Mammary epithelial cell (primary cell): ENCODE measurements at regions of chr16 and their contacts with region 1.

Region 1: GRCh38 chr16:51994597-51994996 is 552.3 kb downstream of the TOX3 start:
- DNase-seq: peak; percentile 96
- H3K4me3 ChIP-seq: no peak overlapping the region
- H3K27ac ChIP-seq: no peak overlapping the region
- H3K4me1 ChIP-seq: peaks cover 22% of the 10 kb centered on the region
- H3K27me3 ChIP-seq: no peaks in the 10 kb centered on the region
- CTCF ChIP-seq: no peak

Region 2: DNA sequence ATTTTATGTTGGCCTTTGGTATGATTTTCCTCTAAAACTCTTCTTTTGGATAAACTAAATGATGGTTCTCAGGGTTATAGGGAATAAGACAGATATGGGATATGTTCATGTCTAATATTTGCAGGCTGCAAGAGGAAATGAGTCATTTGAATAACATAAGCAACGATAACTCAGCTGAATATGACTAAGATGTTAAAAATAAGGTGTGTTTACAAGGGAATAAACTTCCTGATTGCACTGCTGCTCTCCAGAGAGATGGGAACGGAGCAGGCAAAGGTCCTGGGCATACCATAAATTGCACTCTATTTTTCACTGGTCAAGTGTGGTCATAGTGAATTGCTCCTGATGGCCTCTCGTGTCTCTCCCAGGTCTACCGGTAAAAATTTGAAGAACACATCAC is 113.8 kb before region 1 on chr16:
- CTCF ChIA-PET with region 1: no interaction called
- dilution Hi-C with region 1: no loop called
- in situ Hi-C with region 1: no loop called
- intact Hi-C with region 1: loop called (anchors 5 kb)
- DNase-seq: peak; percentile 72
- H3K4me3 ChIP-seq: no peak overlapping the region
- H3K27ac ChIP-seq: peak overlapping the region; percentile 46
- H3K4me1 ChIP-seq: peaks cover 21% of the 10 kb centered on the region
- H3K27me3 ChIP-seq: no peaks in the 10 kb centered on the region
- CTCF ChIP-seq: no peak

Region 3: DNA sequence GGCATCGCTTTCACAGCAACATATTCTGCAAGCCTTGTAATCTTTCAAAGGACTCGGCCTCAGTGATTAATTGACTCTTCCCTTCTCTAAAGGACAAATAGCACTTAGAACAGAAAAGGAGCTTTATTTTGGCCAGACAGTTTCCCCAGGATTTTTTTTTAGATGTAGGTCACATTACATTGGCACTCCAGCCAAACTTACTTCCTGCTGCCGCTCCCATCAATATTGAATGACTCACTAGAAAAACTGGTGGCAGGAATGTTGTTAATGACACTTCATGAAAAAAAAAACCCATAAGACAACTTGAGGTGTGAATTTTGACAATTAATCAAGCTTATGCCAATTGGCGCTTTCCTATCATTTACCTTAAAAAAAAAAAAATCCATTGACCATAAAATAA is 119.8 kb after region 1 on chr16:
- CTCF ChIA-PET with region 1: no interaction called
- dilution Hi-C with region 1: no loop called
- in situ Hi-C with region 1: no loop called
- intact Hi-C with region 1: no loop called
- DNase-seq: no peak
- H3K4me3 ChIP-seq: no peak overlapping the region
- H3K27ac ChIP-seq: no peak overlapping the region
- H3K4me1 ChIP-seq: no peaks in the 10 kb centered on the region
- H3K27me3 ChIP-seq: peaks cover 2% of the 10 kb centered on the region
- CTCF ChIP-seq: no peak

Region 4: DNA sequence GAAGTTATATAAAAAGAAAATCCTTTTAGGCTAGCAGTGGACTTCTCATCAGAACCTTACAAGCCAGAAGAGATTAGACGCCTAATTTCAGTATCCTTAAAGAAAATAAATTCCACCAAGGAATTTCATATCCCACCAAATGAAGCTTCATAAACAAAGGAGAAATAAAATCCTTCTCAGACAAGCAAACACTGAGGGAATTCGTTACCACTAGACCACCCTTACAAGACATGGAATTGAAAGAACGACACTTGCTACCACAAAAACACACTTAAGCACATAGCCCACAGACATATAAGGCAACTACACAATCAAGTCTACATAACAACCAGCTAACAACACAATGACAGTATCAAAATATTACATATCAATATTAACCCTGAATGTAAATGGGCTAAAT is 253.1 kb after region 1 on chr16:
- CTCF ChIA-PET with region 1: no interaction called
- dilution Hi-C with region 1: no loop called
- in situ Hi-C with region 1: no loop called
- intact Hi-C with region 1: no loop called
- DNase-seq: no peak
- H3K4me3 ChIP-seq: no peak overlapping the region
- H3K27ac ChIP-seq: no peak overlapping the region
- H3K4me1 ChIP-seq: no peaks in the 10 kb centered on the region
- H3K27me3 ChIP-seq: no peaks in the 10 kb centered on the region
- CTCF ChIP-seq: no peak